Right ventricle myocardium inferior (tissue), 1 donor: ENCODE measurements at regions of chr17 and their contacts with region 1.

Region 1: GRCh38 chr17:80866147-80866793 is 125.4 kb upstream of the CHMP6 start:
- DNase-seq: peak; percentile 72
- ATAC-seq: peak; percentile 63

Region 2: GRCh38 chr17:80981062-80981902 is 115.0 kb after region 1 on chr17:
- intact Hi-C with region 1: loop called (anchors 5 kb)
- DNase-seq: no peak
- ATAC-seq: no peak